K562 (cell line): ENCODE measurements at regions of chr13 and their contacts with region 1.

Region 1: GRCh38 chr13:113490496-113491417 is at the start of gene DCUN1D2:
- DNase-seq: peak; percentile 89 to 91 (median 89)
- ATAC-seq: peak; percentile 87
- H3K4me3 ChIP-seq: peak within 1 kb of the TSS; percentile 89
- H3K27ac ChIP-seq: peak within 1 kb of the TSS; percentile 88
- H3K4me1 ChIP-seq: peaks cover 15 to 36% of the 10 kb centered on the region in 2 experiments
- H3K27me3 ChIP-seq: no peaks in the 10 kb centered on the region
- CTCF ChIP-seq: no peak
- EP300 ChIP-seq: peak; percentile 4; the same call in 1 of the 2 replicates
- POLR2A ChIP-seq: peak; percentile 56
- RAD21 ChIP-seq: no peak
- polyA plus RNA-seq, gene DCUN1D2: 2.1 to 2.2 TPM

Region 2: GRCh38 chr13:113506025-113506685 is 15.4 kb after region 1 on chr13:
- CTCF ChIA-PET with region 1: no interaction called
- POLR2A ChIA-PET with region 1: interaction called, 10 read pairs
- in situ Hi-C with region 1: no loop called
- intact Hi-C with region 1: no loop called
- DNase-seq: peak; percentile 24 to 57 (median 44)
- ATAC-seq: peak; percentile 75
- H3K4me3 ChIP-seq: no peak overlapping the region
- H3K27ac ChIP-seq: peak overlapping the region; percentile 82
- H3K4me1 ChIP-seq: peaks cover 14 to 37% of the 10 kb centered on the region in 2 experiments; a peak in 4 of 5 replicates
- H3K27me3 ChIP-seq: no peaks in the 10 kb centered on the region
- CTCF ChIP-seq: no peak
- EP300 ChIP-seq: peak; percentile 64; the same call in 1 of the 2 replicates
- POLR2A ChIP-seq: 0 out of 2 replicates have a peak, but pooled peaks have one; percentile 47
- RAD21 ChIP-seq: no peak

Region 3: DNA sequence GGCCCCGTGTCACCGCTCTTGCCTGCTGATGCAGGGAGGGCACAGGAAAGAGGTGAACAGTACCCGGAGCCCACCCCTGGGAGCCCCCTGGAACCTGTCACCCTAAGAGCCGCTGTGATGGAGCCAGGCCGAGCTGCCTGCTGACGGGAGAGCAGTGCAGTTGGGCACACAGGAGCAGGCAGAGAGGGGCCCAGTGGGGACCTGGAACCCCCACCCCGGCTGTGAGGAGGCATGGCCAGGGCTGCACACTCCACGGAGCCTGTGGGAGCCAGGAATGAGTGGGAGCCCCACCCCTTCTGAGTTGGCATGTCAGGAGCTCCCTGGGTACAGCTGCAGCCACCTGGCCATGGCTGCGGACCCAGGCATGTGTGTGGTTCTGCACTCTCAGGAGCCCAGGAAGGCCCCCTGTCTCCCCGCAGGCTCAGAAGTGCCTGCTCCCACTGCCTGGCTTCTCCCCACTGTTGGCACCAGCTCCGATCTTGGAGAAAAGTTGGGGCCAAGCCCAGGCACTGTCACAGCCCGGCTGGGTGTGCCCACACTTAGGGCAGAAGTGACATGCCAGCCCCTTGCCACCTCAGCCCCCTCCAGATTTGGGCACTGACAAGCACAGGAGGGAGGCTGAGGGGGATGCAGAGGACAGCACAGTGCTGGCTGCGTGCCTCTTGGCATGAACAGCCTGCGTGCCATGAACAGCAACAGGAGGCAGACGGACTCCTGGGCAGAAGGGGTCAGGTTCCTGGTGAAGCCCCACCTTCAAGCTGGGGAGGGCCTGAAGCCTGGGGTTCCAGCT is 694.6 kb after region 1 on chr13:
- CTCF ChIA-PET with region 1: no interaction called
- POLR2A ChIA-PET with region 1: no interaction called
- in situ Hi-C with region 1: no loop called
- intact Hi-C with region 1: no loop called
- DNase-seq: no peak
- ATAC-seq: no peak
- H3K4me3 ChIP-seq: no peak overlapping the region
- H3K27ac ChIP-seq: no peak overlapping the region
- H3K4me1 ChIP-seq: no peaks in the 10 kb centered on the region; a peak in 1 of 5 replicates
- H3K27me3 ChIP-seq: peaks cover 6 to 18% of the 10 kb centered on the region in 2 experiments; a peak in 3 of 5 replicates
- CTCF ChIP-seq: no peak
- EP300 ChIP-seq: no peak
- POLR2A ChIP-seq: no peak
- RAD21 ChIP-seq: no peak